CD8-positive, alpha-beta T cell (primary cell): ENCODE measurements at regions of chr17 and their contacts with region 1.

Region 1: DNA sequence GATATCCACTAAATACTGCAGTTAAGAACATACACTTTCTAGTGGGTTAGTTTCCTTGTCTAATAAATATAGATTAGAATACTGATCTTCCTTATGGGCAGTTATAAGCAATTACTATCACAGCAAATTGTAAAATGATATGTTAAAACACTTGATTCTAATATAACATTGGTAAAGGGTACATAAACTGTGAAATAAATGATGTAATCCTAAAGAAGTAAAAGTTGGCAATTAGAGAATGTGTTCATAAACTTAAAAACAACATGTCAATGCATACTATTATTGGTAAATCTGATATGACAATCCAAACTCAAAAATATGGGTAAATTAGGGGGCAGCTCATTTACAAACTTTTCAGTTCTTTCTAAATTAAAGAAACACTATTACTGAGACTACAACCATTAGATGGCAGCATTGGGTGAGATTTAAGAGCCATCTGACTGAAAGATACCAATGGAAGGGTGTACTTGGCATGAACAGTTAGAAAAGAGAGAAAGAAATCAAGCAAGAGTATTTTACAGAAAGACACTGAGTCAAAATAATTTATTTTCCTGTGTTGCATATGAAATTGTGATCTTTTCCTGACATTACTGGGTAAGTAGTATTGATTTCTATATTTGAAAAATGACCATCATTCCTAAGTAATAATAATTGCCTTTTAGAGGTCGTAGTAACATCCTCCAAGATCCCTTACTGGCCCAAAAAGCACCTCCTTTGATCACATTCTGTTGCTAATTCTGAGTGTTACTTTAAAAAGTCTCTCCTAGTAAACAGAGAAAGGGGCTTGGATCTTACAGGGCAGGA is 119.6 kb downstream of the SPAG9 start:
- DNase-seq: peak in 3 of 9 experiments; percentile 14 to 81 (median 74)
- ATAC-seq: peak; percentile 88
- H3K4me3 ChIP-seq: no peak overlapping the region
- H3K4me3 Mint-ChIP-seq: no peak overlapping the region
- H3K27ac ChIP-seq: no peak overlapping the region
- H3K27ac Mint-ChIP-seq: no peak overlapping the region
- H3K4me1 ChIP-seq: no peaks in the 10 kb centered on the region
- H3K4me1 Mint-ChIP-seq: peaks cover 5% of the 10 kb centered on the region
- H3K27me3 ChIP-seq: no peaks in the 10 kb centered on the region
- H3K27me3 Mint-ChIP-seq: no peaks in the 10 kb centered on the region
- CTCF ChIP-seq: peak; percentile 76

Region 2: DNA sequence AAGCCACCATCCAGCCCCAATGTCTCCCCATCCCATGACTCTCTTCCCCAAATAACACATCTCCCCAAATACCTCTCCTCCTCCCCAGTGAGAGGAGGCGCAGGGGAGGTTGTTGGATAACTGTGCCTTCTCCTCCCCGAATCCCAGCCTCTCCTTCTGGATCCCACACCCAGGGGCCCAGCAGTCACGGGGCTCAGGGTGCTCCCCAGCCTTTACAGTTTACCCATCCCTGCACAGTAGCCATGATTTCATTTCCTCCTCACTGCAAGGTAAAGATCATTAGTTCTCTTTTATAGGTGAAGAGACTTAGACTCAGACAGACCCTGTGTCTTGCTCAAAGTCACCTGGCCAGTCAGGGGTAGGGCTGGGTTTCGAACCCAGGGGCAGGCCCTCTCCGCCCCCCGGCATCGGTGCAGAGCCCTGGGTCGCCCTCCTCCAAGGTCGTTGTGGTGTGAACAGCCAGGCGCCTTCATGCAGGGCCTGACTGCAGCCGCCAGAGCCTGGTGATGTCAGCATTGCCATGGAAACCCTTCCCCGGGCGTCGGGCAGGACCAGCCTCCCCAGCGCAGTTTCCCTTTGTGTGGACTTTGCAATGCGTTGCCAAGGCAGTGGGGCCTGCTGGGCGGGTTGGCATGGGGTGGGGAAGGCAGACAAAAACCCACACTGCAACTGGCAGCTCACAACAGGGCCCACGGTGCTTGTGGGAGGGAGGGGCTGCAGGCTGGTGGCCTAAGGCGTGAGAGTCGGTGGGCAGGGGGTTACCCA is 81.5 kb before region 1 on chr17:
- CTCF ChIA-PET with region 1: no interaction called
- POLR2A ChIA-PET with region 1: no interaction called
- intact Hi-C with region 1: no loop called
- DNase-seq: peak; percentile 69 to 96 (median 86)
- ATAC-seq: peak; percentile 83
- H3K4me3 ChIP-seq: peak overlapping the region in 1 of 2 experiments; percentile 17
- H3K4me3 Mint-ChIP-seq: peak overlapping the region; percentile 69
- H3K27ac ChIP-seq: peak overlapping the region; percentile 86 to 89
- H3K27ac Mint-ChIP-seq: peak overlapping the region; percentile 94
- H3K4me1 ChIP-seq: peaks cover 50% of the 10 kb centered on the region
- H3K4me1 Mint-ChIP-seq: peaks cover 40% of the 10 kb centered on the region
- H3K27me3 ChIP-seq: no peaks in the 10 kb centered on the region
- H3K27me3 Mint-ChIP-seq: no peaks in the 10 kb centered on the region
- CTCF ChIP-seq: no peak

Region 3: GRCh38 chr17:51056813-51057510 is 55.9 kb after region 1 on chr17:
- CTCF ChIA-PET with region 1: interaction called, 35 read pairs
- POLR2A ChIA-PET with region 1: no interaction called
- intact Hi-C with region 1: loop called (anchors 1 kb)
- DNase-seq: peak in 2 of 9 experiments; percentile 46 to 61
- ATAC-seq: no peak
- H3K4me3 ChIP-seq: no peak overlapping the region
- H3K4me3 Mint-ChIP-seq: no peak overlapping the region
- H3K27ac ChIP-seq: no peak overlapping the region
- H3K27ac Mint-ChIP-seq: peak overlapping the region; percentile 50
- H3K4me1 ChIP-seq: no peaks in the 10 kb centered on the region
- H3K4me1 Mint-ChIP-seq: peaks cover 14% of the 10 kb centered on the region
- H3K27me3 ChIP-seq: no peaks in the 10 kb centered on the region
- H3K27me3 Mint-ChIP-seq: no peaks in the 10 kb centered on the region
- CTCF ChIP-seq: peak; percentile 48

Region 4: GRCh38 chr17:51107778-51108177 is 106.7 kb after region 1 on chr17:
- CTCF ChIA-PET with region 1: no interaction called
- POLR2A ChIA-PET with region 1: no interaction called
- intact Hi-C with region 1: no loop called
- DNase-seq: no peak
- ATAC-seq: no peak
- H3K4me3 ChIP-seq: no peak overlapping the region
- H3K4me3 Mint-ChIP-seq: no peak overlapping the region
- H3K27ac ChIP-seq: no peak overlapping the region
- H3K27ac Mint-ChIP-seq: no peak overlapping the region
- H3K4me1 ChIP-seq: no peaks in the 10 kb centered on the region
- H3K4me1 Mint-ChIP-seq: peaks cover 23% of the 10 kb centered on the region
- H3K27me3 ChIP-seq: no peaks in the 10 kb centered on the region
- H3K27me3 Mint-ChIP-seq: no peaks in the 10 kb centered on the region
- CTCF ChIP-seq: no peak

Region 5: GRCh38 chr17:51120739-51121617 is 119.9 kb after region 1 on chr17 and contains the start of gene SPAG9:
- CTCF ChIA-PET with region 1: interaction called, 6 read pairs
- POLR2A ChIA-PET with region 1: interaction called, 5 read pairs
- intact Hi-C with region 1: loop called in 1 of 2 experiments (anchors 1 kb)
- DNase-seq: peak; percentile 79 to 96 (median 88)
- ATAC-seq: peak; percentile 84
- H3K4me3 ChIP-seq: peak within 1 kb of the TSS; percentile 96
- H3K4me3 Mint-ChIP-seq: peak within 1 kb of the TSS; percentile 94
- H3K27ac ChIP-seq: peak within 1 kb of the TSS; percentile 95
- H3K27ac Mint-ChIP-seq: peak within 1 kb of the TSS; percentile 98
- H3K4me1 ChIP-seq: peaks cover 38% of the 10 kb centered on the region
- H3K4me1 Mint-ChIP-seq: peaks cover 49% of the 10 kb centered on the region
- H3K27me3 ChIP-seq: no peaks in the 10 kb centered on the region
- H3K27me3 Mint-ChIP-seq: no peaks in the 10 kb centered on the region
- CTCF ChIP-seq: no peak
- total RNA-seq, gene SPAG9: 75.7 to 77.6 TPM

Region 6: GRCh38 chr17:51166197-51166986 is 165.4 kb after region 1 on chr17 and contains the start of gene NME2:
- CTCF ChIA-PET with region 1: interaction called, 4 read pairs
- POLR2A ChIA-PET with region 1: no interaction called
- intact Hi-C with region 1: loop called (anchors 1 to 5 kb)
- DNase-seq: peak; percentile 10 to 84 (median 59)
- ATAC-seq: peak; percentile 69
- H3K4me3 ChIP-seq: peak within 1 kb of the TSS; percentile 70 to 78
- H3K4me3 Mint-ChIP-seq: peak within 1 kb of the TSS; percentile 90
- H3K27ac ChIP-seq: peak within 1 kb of the TSS; percentile 52 to 84
- H3K27ac Mint-ChIP-seq: peak within 1 kb of the TSS; percentile 91
- H3K4me1 ChIP-seq: peaks cover 13% of the 10 kb centered on the region
- H3K4me1 Mint-ChIP-seq: peaks cover 23% of the 10 kb centered on the region
- H3K27me3 ChIP-seq: no peaks in the 10 kb centered on the region
- H3K27me3 Mint-ChIP-seq: no peaks in the 10 kb centered on the region
- CTCF ChIP-seq: no peak
- total RNA-seq, gene NME2: 165 to 168 TPM

Region 7: DNA sequence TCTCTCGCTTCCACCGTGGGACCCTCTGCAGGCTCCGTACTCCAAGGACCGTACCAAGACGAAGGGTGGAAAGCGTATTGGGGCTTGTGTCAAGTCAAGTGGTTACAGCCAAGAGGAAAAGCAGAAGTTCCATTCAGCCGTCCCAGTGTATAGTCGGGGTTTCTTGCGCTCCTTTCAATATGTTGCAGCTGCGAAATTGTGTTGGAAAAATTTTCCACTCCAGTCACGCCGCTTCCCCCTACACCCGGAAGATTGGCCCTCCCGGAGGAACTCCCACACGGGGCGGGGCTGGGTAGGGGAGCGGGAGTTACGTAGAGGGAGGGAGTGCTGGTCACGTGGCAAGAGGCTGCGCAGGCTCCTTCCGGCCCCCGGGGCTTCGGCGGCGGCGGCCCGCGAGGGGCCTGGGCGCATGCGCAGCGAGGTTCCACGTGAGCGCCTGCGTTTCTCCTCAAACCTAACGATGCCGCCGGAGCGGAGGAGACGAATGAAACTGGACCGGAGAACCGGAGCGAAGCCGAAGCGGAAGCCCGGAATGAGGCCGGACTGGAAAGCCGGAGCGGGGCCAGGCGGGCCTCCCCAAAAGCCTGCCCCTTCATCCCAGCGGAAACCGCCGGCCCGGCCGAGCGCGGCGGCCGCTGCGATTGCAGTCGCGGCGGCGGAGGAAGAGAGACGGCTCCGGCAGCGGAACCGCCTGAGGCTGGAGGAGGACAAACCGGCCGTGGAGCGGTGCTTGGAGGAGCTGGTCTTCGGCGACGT is 259.3 kb after region 1 on chr17 and contains the start of gene UTP18:
- CTCF ChIA-PET with region 1: interaction called, 6 read pairs
- POLR2A ChIA-PET with region 1: interaction called, 3 read pairs
- intact Hi-C with region 1: loop called in 1 of 2 experiments (anchors 5 kb)
- DNase-seq: peak; percentile 91 to 99 (median 97)
- ATAC-seq: peak; percentile 87
- H3K4me3 ChIP-seq: peak within 1 kb of the TSS; percentile 76 to 87
- H3K4me3 Mint-ChIP-seq: peak within 1 kb of the TSS; percentile 97
- H3K27ac ChIP-seq: peak within 1 kb of the TSS; percentile 97 to 98
- H3K27ac Mint-ChIP-seq: peak within 1 kb of the TSS; percentile 98
- H3K4me1 ChIP-seq: peaks cover 46% of the 10 kb centered on the region
- H3K4me1 Mint-ChIP-seq: peaks cover 67% of the 10 kb centered on the region
- H3K27me3 ChIP-seq: no peaks in the 10 kb centered on the region
- H3K27me3 Mint-ChIP-seq: no peaks in the 10 kb centered on the region
- CTCF ChIP-seq: no peak
- total RNA-seq, gene UTP18: 53.5 to 59.8 TPM